HAP-1 (cell line): ENCODE measurements at regions of chr2 and their contacts with region 1.

Region 1: DNA sequence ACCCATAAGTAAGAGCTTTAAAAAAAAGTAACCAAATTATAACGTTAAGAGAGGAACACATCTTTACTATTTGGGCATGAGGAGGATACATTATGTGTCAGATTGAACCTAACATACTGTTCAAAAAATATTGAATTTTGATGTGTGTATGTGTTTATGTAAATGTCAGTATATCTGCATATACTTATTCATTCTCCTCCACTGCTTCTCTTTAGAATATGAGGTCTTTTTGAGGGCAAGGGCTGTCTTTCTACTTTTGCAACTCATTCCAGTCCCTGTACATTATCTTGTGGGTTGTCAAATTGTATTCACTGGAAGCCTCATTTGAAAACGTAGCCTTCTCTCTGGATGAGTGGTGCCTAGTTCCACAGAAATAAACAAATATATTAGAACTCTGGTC is 509.4 kb upstream of the HNMT start:
- DNase-seq: no peak
- H3K4me3 ChIP-seq: no peak overlapping the region
- H3K4me1 ChIP-seq: peaks cover 8% of the 10 kb centered on the region; the same call in 1 of the 2 replicates
- H3K27me3 ChIP-seq: 0 out of 2 replicates have a peak, but pooled peaks cover 2% of the 10 kb centered on the region

Region 2: GRCh38 chr2:137607722-137608318 is 152.9 kb after region 1 on chr2:
- in situ Hi-C with region 1: loop called (anchors 10 kb)
- DNase-seq: no peak
- H3K4me3 ChIP-seq: no peak overlapping the region
- H3K4me1 ChIP-seq: no peaks in the 10 kb centered on the region
- H3K27me3 ChIP-seq: no peaks in the 10 kb centered on the region